Calu3 (cell line): ENCODE measurements at regions of chr5 and their contacts with region 1.

Region 1: GRCh38 chr5:137660349-137660817 is 75.5 kb downstream of the KLHL3 start:
- DNase-seq: peak; percentile 78
- H3K4me3 Mint-ChIP-seq: no peak overlapping the region
- H3K27ac Mint-ChIP-seq: no peak overlapping the region
- H3K4me1 Mint-ChIP-seq: peaks cover 30% of the 10 kb centered on the region
- H3K27me3 Mint-ChIP-seq: no peaks in the 10 kb centered on the region
- CTCF ChIP-seq: peak; percentile 85

Region 2: GRCh38 chr5:137718611-137719010 is 58.2 kb after region 1 on chr5:
- CTCF ChIA-PET with region 1: interaction called, 14 read pairs
- intact Hi-C with region 1: no loop called
- DNase-seq: no peak
- H3K4me3 Mint-ChIP-seq: no peak overlapping the region
- H3K27ac Mint-ChIP-seq: peak overlapping the region; percentile 9
- H3K4me1 Mint-ChIP-seq: peaks cover 33% of the 10 kb centered on the region
- H3K27me3 Mint-ChIP-seq: no peaks in the 10 kb centered on the region
- CTCF ChIP-seq: no peak

Region 3: GRCh38 chr5:137728048-137728447 is 67.7 kb after region 1 on chr5:
- CTCF ChIA-PET with region 1: interaction called, 18 read pairs
- intact Hi-C with region 1: no loop called
- DNase-seq: no peak
- H3K4me3 Mint-ChIP-seq: no peak overlapping the region
- H3K27ac Mint-ChIP-seq: no peak overlapping the region
- H3K4me1 Mint-ChIP-seq: peaks cover 2% of the 10 kb centered on the region
- H3K27me3 Mint-ChIP-seq: no peaks in the 10 kb centered on the region
- CTCF ChIP-seq: no peak

Region 4: DNA sequence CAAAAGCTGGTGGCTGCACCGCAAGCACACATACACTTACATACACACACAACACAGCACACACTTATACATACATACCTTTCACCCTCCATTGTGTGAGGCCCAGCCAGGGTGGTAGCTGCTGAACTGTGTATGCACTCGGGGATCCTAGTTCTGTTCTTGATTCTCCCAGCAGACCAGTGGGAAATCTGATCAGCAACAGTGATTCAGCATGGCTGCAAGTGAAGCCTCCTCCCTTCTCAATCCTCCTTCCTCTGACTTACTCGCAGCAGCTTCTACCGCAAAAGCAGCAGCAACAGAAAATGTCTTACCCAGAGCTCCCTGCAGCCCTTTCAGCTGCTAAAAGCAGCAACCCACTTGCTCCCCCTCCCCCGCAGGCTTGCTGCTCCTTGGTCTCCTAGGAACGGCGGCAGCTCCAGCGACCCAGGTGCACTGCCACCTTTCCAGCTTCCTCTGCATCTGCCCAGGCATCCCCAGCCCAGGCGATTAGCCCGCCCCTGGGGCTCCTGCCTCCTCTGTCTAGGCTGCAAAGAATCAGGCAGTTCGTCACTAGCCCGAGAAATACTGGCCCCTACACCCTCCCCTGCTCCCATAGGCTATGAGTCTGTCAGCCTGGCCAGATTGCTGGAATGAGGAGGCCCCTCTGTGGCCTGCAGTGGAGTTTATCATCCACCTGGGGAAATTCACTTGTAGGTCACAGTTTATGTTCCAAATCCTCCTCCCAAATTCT is 75.3 kb after region 1 on chr5 and contains the start of gene KLHL3:
- CTCF ChIA-PET with region 1: interaction called, 152 read pairs
- intact Hi-C with region 1: loop called (anchors 1 kb)
- DNase-seq: peak; percentile 73
- H3K4me3 Mint-ChIP-seq: no peak within 1 kb of the TSS
- H3K27ac Mint-ChIP-seq: no peak within 1 kb of the TSS
- H3K4me1 Mint-ChIP-seq: peaks cover 10% of the 10 kb centered on the region
- H3K27me3 Mint-ChIP-seq: no peaks in the 10 kb centered on the region
- CTCF ChIP-seq: no peak
- total RNA-seq, gene KLHL3: 16.9 and 18.2 TPM in 2 replicates

Region 5: DNA sequence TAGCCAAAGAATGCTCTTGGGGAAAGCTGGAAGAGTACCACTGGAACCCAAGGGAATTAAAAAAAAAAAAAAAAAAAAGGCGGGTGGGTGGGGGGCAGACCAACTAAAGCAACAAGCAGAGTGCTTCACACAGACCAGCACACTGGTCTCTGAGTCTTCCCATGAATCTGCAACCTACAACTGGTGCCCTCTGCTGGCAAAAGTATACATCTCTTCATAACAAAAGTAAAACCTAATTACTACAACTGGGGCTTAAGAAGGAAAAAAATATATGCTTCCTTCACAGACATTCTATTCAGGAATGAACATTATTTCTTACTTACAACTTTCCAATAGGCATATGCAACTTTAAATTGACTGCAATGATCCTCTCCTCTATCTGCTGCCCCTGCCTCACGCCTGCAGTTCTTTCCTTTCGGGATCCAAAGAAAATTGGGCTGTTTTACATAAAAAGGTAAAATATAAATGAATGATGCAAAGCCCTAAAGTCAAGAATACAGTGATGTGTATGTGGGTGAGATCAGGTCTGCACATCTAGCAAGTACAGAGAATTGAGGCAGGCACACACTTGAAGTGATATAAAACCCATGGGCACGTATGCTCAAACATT is 82.8 kb after region 1 on chr5:
- CTCF ChIA-PET with region 1: interaction called, 152 read pairs
- intact Hi-C with region 1: loop called (anchors 1 kb)
- DNase-seq: peak; percentile 71
- H3K4me3 Mint-ChIP-seq: no peak overlapping the region
- H3K27ac Mint-ChIP-seq: no peak overlapping the region
- H3K4me1 Mint-ChIP-seq: no peaks in the 10 kb centered on the region
- H3K27me3 Mint-ChIP-seq: no peaks in the 10 kb centered on the region
- CTCF ChIP-seq: peak; percentile 68

Region 6: GRCh38 chr5:137822158-137822764 is 161.9 kb after region 1 on chr5:
- CTCF ChIA-PET with region 1: interaction called, 3 read pairs
- intact Hi-C with region 1: loop called (anchors 10 kb)
- DNase-seq: peak; percentile 75
- H3K4me3 Mint-ChIP-seq: no peak overlapping the region
- H3K27ac Mint-ChIP-seq: no peak overlapping the region
- H3K4me1 Mint-ChIP-seq: peaks cover 21% of the 10 kb centered on the region
- H3K27me3 Mint-ChIP-seq: no peaks in the 10 kb centered on the region
- CTCF ChIP-seq: peak; percentile 60

Region 7: GRCh38 chr5:138632900-138633489 is 972.6 kb after region 1 on chr5:
- CTCF ChIA-PET with region 1: no interaction called
- intact Hi-C with region 1: no loop called
- DNase-seq: peak; percentile 61
- H3K4me3 Mint-ChIP-seq: no peak overlapping the region
- H3K27ac Mint-ChIP-seq: peak overlapping the region; percentile 33
- H3K4me1 Mint-ChIP-seq: no peaks in the 10 kb centered on the region
- H3K27me3 Mint-ChIP-seq: no peaks in the 10 kb centered on the region
- CTCF ChIP-seq: peak; percentile 16